Heart left ventricle (tissue), 16 donors: ENCODE measurements at regions of chr1 and their contacts with region 1.

Region 1: GRCh38 chr1:84620720-84621313 is 46.6 kb upstream of the CTBS start:
- DNase-seq: peak; percentile 69 to 90 (median 75)
- ATAC-seq: peak; percentile 75 to 96 (median 92)
- H3K4me3 ChIP-seq: peak overlapping the region; percentile 30 to 78 (median 62)
- H3K27ac ChIP-seq: peak overlapping the region in 8 of 12 donors; percentile 10 to 70 (median 47)
- H3K4me1 ChIP-seq: peaks cover 0 to 22% (median 8%) of the 10 kb centered on the region in 12 donors
- H3K27me3 ChIP-seq: no peaks in the 10 kb centered on the region
- CTCF ChIP-seq: peak in 11 of 12 donors; percentile 92 to 100 (median 97)
- POLR2A ChIP-seq: no peak

Region 2: DNA sequence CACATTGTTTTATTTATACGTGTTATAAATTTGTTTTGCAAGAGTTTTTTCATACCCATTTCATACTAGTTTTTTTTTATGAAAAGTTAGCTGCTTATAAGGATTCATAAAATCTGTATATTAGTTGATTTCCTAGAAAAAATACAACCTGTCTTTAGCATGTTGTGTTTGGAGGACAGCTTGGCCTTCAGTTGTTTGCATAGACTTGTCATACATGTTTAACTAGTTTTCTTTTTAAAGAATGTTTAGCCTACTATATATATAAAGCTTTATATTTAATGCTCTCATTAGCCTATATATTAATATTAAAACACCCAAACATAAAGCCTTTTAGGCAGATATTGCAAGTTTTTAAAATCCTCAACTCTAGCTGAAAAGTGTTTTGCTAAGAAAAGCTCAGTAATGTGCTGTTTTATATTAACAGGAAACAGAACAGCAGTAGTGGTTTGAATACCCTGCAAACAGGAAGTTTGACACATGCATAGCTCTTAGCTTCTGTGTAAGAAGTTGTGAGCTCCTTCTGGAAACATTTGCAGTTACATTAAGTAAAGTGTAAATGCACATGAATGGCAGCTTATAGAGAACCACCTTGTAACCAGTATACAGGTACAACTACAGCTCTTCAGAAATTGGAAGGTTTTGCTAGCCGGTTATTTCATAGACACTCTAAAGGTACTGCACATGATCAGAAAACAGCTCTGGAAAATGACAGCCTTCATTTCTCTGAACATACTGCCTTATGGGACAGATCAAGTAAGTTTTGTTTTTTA is 476.8 kb before region 1 on chr1 and contains the start of gene PRKACB:
- intact Hi-C with region 1: loop called in 2 of 10 experiments (anchors 5 kb)
- DNase-seq: no peak
- ATAC-seq: peak in 3 of 4 donors; percentile 56 to 67 (median 64)
- H3K4me3 ChIP-seq: peak within 1 kb of the TSS in 6 of 12 donors; percentile 0 to 52 (median 24)
- H3K27ac ChIP-seq: peak within 1 kb of the TSS in 1 of 12 donors; percentile 87
- H3K4me1 ChIP-seq: peaks cover 0 to 26% (median 0%) of the 10 kb centered on the region in 12 donors
- H3K27me3 ChIP-seq: no peaks in the 10 kb centered on the region
- CTCF ChIP-seq: no peak
- POLR2A ChIP-seq: no peak
- total RNA-seq, gene PRKACB: 16.6 to 52.3 (median 41.1) TPM

Region 3: DNA sequence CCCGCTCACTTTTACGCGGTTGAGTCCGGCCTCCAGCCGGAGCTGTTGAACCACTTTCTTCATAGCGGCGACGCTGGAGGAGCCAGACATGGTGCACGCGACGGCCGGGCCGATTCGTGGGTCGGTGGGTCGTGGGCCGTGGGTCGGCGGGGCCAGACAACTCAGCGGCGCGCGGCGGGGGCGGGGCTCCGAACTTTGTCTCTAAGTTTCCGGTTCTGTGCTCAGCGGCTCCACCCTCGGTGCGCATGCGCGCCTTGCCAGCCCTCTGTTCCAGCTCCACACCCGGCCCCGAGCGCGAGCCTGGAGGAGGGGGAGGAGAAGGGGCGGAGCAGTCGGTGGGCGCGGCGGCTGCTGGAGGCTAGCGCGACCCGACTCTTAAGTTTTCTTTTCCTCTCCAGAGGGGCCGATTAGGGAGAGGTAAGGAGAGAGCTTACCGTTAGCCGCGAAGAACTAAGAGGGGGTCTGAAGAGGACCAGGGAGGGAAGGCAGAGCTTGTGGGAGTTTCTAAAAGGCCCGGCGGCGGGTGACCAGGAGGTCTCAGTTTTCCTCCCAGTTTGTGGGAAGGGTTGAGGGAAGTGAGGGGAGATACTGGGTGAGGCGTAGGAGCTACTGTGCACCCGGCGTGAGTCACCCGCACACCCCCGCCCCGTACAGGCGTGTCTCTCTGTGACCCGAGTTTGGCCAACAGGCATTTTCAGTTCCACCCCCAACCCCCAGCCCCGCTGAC is 114.7 kb before region 1 on chr1 and contains the starts of genes GNG5 and SPATA1:
- intact Hi-C with region 1: loop called in 1 of 10 experiments (anchors 5 kb)
- DNase-seq: peak; percentile 99 to 100 (median 99)
- ATAC-seq: peak; percentile 96 to 98 (median 98)
- H3K4me3 ChIP-seq: peak within 1 kb of the TSS; percentile 47 to 91 (median 82)
- H3K27ac ChIP-seq: peak within 1 kb of the TSS; percentile 89 to 99 (median 96)
- H3K4me1 ChIP-seq: peaks cover 0 to 51% (median 32%) of the 10 kb centered on the region in 12 donors
- H3K27me3 ChIP-seq: no peaks in the 10 kb centered on the region
- CTCF ChIP-seq: peak in 1 of 12 donors; percentile 7
- POLR2A ChIP-seq: peak in 1 of 2 donors; percentile 72
- total RNA-seq, gene GNG5: 129 to 217 (median 160) TPM
- total RNA-seq, gene SPATA1: 0.82 to 2.0 (median 1.2) TPM in 8 of 9 donors, not detected in the other

Region 4: DNA sequence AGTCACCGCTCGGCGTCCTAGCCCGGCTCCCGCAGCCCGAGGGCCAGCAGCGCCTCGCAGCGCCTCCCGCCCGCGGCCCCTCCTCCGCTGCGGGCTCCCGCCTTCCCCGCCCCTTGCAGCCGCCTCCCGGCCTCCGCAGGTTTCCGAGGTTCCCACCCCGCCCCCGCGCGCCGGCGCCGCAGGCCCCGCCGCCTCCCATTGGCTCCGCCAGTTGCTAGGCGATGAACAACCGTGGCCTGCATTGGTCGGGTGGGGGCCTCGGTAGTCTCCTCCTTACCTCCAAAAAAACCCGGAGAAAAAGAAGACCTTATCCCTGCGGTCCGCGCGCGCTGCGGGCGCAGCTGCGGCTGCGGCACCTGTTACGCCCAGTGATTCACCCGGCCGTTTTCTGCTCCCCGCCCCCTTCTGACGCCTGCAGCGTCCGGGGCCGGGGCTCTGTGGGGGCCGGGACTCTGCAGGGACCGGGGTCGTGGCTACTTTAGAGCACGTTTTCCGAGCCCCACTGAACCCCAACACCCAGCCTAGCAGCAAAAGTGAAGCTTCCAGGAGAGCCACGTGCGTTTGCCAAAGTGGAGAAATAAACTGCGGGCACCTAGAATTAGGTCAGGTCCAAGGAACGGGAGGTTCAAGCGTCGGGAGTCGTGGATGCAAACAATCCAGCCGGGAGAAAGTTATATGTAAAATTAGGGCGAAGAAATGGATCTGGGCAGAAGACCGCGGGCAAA is 69.7 kb after region 1 on chr1 and contains the start of gene SSX2IP:
- intact Hi-C with region 1: loop called in 1 of 10 experiments (anchors 2 kb)
- DNase-seq: peak; percentile 97 to 99 (median 98)
- ATAC-seq: peak; percentile 97 to 99 (median 98)
- H3K4me3 ChIP-seq: peak within 1 kb of the TSS; percentile 65 to 96 (median 88)
- H3K27ac ChIP-seq: peak within 1 kb of the TSS; percentile 31 to 90 (median 83)
- H3K4me1 ChIP-seq: peaks cover 0 to 31% (median 10%) of the 10 kb centered on the region in 12 donors
- H3K27me3 ChIP-seq: no peaks in the 10 kb centered on the region
- CTCF ChIP-seq: no peak
- POLR2A ChIP-seq: peak in 1 of 2 donors; percentile 68
- total RNA-seq, gene SSX2IP: 4.5 to 18.5 (median 13.7) TPM

Region 5: GRCh38 chr1:84753516-84754385 is 132.9 kb after region 1 on chr1:
- intact Hi-C with region 1: loop called in 5 of 10 experiments (anchors 5 to 10 kb)
- DNase-seq: peak; percentile 54 to 72 (median 68)
- ATAC-seq: peak; percentile 84 to 92 (median 90)
- H3K4me3 ChIP-seq: no peak overlapping the region
- H3K27ac ChIP-seq: no peak overlapping the region
- H3K4me1 ChIP-seq: peaks cover 0 to 15% (median 3%) of the 10 kb centered on the region in 12 donors
- H3K27me3 ChIP-seq: peaks cover 0 to 3% (median 0%) of the 10 kb centered on the region in 9 donors
- CTCF ChIP-seq: peak; percentile 83 to 93 (median 88)
- POLR2A ChIP-seq: no peak

Region 6: DNA sequence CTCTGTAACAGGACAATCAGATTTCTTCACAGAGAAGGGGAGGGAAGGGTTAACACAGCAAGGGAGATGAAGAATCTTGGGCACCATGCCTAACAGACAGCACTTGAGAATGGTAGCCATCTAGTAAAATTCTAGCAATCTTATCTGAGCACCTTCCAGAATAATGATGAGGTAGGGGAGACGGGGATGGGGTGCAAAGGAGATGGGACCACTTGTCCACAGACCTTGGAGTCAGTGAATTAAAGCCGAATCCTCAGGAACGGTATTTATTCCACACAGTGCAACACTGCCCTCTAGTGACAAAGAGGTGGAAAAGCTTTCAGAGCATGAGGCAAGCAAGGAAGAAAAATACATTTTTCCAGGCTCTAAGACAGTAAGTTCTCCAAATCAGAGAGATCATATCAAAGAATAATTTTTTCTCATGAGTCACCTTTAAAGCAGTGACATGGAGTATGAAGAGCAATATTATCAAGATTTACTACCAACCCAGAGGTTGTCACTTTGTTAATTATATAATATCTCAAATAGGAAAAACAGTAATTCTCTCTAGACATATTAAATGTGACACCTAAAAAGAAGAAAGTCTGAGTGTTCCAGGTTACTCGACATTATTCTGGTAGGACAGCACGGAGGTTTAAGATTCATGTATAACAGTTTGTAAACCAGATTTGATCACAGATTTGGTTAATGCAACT is 315.4 kb after region 1 on chr1:
- intact Hi-C with region 1: loop called in 1 of 10 experiments (anchors 5 kb)
- DNase-seq: peak in 1 of 5 donors; percentile 29
- ATAC-seq: peak in 3 of 4 donors; percentile 73 to 80 (median 79)
- H3K4me3 ChIP-seq: no peak overlapping the region
- H3K27ac ChIP-seq: no peak overlapping the region
- H3K4me1 ChIP-seq: no peaks in the 10 kb centered on the region
- H3K27me3 ChIP-seq: peaks cover 0 to 6% (median 0%) of the 10 kb centered on the region in 9 donors
- CTCF ChIP-seq: peak; percentile 86 to 95 (median 92)
- POLR2A ChIP-seq: no peak